Gastrocnemius medialis (tissue), 4 donors: ENCODE measurements at regions of chr20 and their contacts with region 1.

Region 1: GRCh38 chr20:4108495-4109306 is 93.3 kb upstream of the RNF24 start:
- DNase-seq: peak; percentile 42 to 44
- ATAC-seq: peak; percentile 86 to 90
- H3K4me3 ChIP-seq: no peak overlapping the region
- H3K27ac ChIP-seq: no peak overlapping the region
- H3K4me1 ChIP-seq: peaks cover 10 to 19% of the 10 kb centered on the region in 2 donors
- H3K27me3 ChIP-seq: no peaks in the 10 kb centered on the region
- CTCF ChIP-seq: peak; percentile 81 to 98 (median 94)
- POLR2A ChIP-seq: no peak

Region 2: GRCh38 chr20:4174909-4175308 is 66.2 kb after region 1 on chr20:
- in situ Hi-C with region 1: loop called (anchors 5 kb)
- intact Hi-C with region 1: no loop called
- DNase-seq: no peak
- ATAC-seq: no peak
- H3K4me3 ChIP-seq: no peak overlapping the region
- H3K27ac ChIP-seq: no peak overlapping the region
- H3K4me1 ChIP-seq: peaks cover 0 to 9% of the 10 kb centered on the region in 2 donors
- H3K27me3 ChIP-seq: no peaks in the 10 kb centered on the region
- CTCF ChIP-seq: no peak
- POLR2A ChIP-seq: no peak

Region 3: GRCh38 chr20:4261333-4262217 is 152.9 kb after region 1 on chr20:
- in situ Hi-C with region 1: no loop called
- intact Hi-C with region 1: no loop called
- DNase-seq: no peak
- ATAC-seq: no peak
- H3K4me3 ChIP-seq: no peak overlapping the region
- H3K27ac ChIP-seq: no peak overlapping the region
- H3K4me1 ChIP-seq: no peaks in the 10 kb centered on the region
- H3K27me3 ChIP-seq: no peaks in the 10 kb centered on the region
- CTCF ChIP-seq: no peak
- POLR2A ChIP-seq: no peak

Region 4: GRCh38 chr20:4592316-4593148 is 483.8 kb after region 1 on chr20:
- in situ Hi-C with region 1: loop called in 3 of 4 experiments (anchors 25 kb)
- intact Hi-C with region 1: loop called (anchors 10 kb)
- DNase-seq: no peak
- ATAC-seq: no peak
- H3K4me3 ChIP-seq: peak overlapping the region; percentile 29 to 55 (median 30)
- H3K27ac ChIP-seq: no peak overlapping the region
- H3K4me1 ChIP-seq: no peaks in the 10 kb centered on the region
- H3K27me3 ChIP-seq: peaks cover 0 to 18% (median 0%) of the 10 kb centered on the region in 3 donors
- CTCF ChIP-seq: peak; percentile 44 to 85 (median 65)
- POLR2A ChIP-seq: no peak